ENCODE measurements at regions of chr2 and their contacts with region 1.

Region 1: DNA sequence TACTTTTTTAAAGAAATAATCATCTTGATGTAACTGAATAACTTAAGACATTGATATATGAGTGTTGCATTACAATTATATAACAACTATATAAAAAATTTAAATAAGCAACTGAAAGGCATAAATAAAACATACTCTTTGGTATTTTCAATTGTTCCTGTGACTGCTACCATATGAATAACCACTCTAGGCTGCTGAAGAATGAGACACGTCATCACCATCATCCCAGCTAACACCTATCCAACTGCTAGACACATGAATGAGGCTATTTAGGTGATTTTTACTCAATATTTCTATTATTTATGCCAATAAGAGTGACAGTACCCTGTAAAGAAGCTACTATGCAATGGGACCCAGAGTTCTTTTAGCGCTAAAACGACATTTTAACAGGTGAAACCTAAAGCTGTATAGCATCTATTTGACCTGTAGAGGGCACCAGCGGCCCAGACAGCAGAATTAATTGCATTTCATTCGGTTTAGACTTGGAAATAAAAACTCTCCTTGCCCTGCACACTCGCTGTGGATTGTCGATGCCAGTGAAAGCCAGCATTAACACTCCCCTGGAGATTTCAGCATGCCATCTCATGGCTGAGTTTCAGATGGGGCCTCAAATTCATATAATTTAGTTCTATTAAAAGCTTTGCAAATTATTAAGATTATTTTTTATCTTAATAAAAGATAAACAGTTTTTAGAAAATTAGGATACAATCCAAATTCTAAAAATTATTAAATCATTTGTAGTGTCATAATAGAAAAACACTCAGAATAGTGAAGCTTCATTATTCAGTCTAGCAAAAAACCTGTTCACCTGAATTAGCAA is 89.4 kb upstream of the MAP2 start:
- DNase-seq: peak; percentile 23 to 36
- ATAC-seq: peak; percentile 39

Region 2: GRCh38 chr2:209113026-209113425 is 221.4 kb before region 1 on chr2:
- intact Hi-C with region 1: no loop called
- DNase-seq: no peak
- ATAC-seq: no peak

Region 3: DNA sequence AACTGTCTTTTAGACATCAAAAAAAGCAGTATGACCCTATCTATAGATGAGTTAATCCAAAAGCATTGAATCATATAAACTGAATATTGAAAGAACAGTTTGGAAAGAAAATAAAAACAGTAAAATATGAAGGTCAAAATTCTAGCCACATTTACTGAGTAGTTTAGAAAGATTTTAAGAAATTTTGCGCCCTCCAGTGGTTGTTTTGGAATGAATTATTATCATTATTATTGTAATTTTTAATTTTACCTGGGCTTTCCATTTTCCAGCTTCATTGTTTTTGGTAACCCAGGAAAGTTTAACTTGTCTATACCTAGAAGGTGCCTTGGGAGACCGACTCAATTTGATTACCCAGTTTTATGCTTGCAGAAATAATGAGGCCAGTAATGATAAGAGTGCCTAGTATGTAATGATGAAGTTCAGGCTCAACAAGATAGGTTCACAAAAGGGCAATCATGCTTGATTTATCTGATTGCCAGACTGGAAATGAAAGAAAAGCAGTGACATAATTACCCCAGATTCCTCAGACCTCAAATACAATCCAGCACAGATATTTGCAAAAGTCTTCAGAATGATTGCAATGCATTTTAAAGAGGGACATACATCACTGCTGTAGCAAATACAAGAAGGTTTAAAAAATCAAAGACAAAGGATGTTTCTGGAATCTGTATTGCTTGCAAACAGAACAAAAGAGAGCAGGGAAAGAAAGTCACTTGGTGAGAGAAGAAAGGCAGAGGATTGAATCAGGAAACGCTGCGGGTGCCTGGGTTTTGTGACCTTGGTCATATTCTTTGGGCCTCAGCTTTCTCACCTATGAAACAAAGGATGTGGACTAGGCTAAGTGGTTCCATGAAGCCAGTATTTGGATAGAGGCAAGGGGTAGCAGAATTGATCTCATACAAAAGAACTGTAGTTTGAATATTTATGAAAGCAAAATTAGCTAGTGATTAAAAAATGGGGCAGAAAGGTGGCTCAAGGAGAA is 243.3 kb after region 1 on chr2:
- intact Hi-C with region 1: loop called in 1 of 2 experiments (anchors 10 kb)
- DNase-seq: no peak
- ATAC-seq: no peak

Region 4: DNA sequence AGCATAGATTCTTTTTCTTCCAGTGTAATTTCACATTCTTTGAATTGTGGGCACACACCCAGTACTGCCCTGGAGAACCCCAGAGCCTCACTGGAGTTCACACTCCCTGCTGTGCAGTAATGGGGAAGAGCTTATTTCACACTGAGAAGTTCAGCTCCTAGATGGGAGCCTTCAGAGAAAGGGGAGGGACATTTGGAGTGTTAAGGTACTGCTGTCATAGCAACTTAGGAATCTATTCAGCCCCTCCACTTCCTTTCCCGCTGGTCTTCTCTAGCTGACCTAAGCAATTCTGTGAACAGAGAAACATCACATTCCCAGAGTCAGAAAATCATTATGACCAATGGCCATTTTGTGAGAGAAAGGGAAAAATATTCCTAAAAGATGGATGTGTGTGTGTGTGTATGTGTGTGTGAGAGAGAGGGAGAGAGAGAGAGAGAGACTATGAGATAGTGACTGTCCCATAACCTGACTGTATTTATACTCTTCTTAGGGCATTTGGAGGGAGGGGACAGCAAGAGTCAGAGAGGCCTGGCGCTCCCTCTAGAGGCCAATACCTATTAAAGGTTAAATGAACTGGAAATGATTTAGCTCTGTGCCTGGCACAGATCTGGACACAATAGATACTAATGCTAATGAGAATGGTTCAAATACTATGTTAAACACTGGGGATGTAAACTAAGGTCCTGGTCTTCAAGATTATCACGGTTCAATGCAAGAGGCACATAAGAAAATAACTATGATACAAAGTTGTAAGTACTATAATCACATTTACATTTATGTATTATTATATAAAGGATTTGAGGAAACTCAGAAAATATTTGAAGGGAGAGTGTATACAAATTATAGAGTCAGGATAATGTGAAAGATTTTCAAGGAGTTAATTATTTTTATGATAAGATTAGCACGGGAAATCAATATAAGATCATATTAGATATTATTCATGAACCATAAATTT is 626.5 kb after region 1 on chr2:
- intact Hi-C with region 1: loop called in 1 of 2 experiments (anchors 10 kb)
- DNase-seq: peak in 1 of 2 donors; percentile 47
- ATAC-seq: peak; percentile 67

Measured in left colon (tissue), 2 donors.